ENCODE measurements at regions of chr6 and their contacts with region 1.

Region 1: GRCh38 chr6:73782911-73783310 is 86.9 kb downstream of the CD109 start:
- DNase-seq: no peak
- ATAC-seq: no peak
- H3K4me3 ChIP-seq: no peak overlapping the region
- H3K27ac ChIP-seq: no peak overlapping the region
- H3K4me1 ChIP-seq: no peaks in the 10 kb centered on the region
- H3K27me3 ChIP-seq: no peaks in the 10 kb centered on the region
- CTCF ChIP-seq: no peak
- POLR2A ChIP-seq: no peak
- RAD21 ChIP-seq: no peak

Region 2: DNA sequence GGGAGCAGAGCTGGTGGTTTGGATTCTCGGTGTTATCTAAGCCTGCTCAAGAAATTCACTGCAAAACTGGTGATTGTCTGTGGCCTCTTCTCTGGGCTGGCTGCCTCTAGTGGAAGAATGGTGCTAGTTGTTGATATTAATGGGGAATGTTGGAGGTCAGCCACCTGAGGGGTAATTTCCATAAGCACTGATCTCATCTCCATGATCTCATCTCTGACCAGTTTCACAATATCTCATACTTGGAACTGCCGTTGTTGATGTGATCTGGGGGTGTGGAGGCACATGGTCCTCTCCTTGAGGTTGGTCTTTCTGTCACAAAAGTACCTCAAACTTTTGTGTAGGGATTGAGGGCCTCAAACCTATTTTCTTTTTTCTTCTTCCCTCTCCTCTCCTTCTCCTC is 15.7 kb after region 1 on chr6:
- CTCF ChIA-PET with region 1: interaction called, 8 read pairs
- POLR2A ChIA-PET with region 1: no interaction called
- dilution Hi-C with region 1: no loop called
- in situ Hi-C with region 1: no loop called
- intact Hi-C with region 1: loop called (anchors 2 kb)
- DNase-seq: peak; percentile 99
- ATAC-seq: peak; percentile 89
- H3K4me3 ChIP-seq: no peak overlapping the region
- H3K27ac ChIP-seq: peak overlapping the region; percentile 76; the same call in 1 of the 2 replicates
- H3K4me1 ChIP-seq: peaks cover 13% of the 10 kb centered on the region
- H3K27me3 ChIP-seq: no peaks in the 10 kb centered on the region
- CTCF ChIP-seq: peak; percentile 77
- POLR2A ChIP-seq: no peak
- RAD21 ChIP-seq: peak; percentile 51

Region 3: GRCh38 chr6:73811706-73812105 is 28.8 kb after region 1 on chr6:
- CTCF ChIA-PET with region 1: no interaction called
- POLR2A ChIA-PET with region 1: no interaction called
- dilution Hi-C with region 1: no loop called
- in situ Hi-C with region 1: no loop called
- intact Hi-C with region 1: loop called (anchors 1 kb)
- DNase-seq: no peak
- ATAC-seq: no peak
- H3K4me3 ChIP-seq: no peak overlapping the region
- H3K27ac ChIP-seq: no peak overlapping the region
- H3K4me1 ChIP-seq: no peaks in the 10 kb centered on the region
- H3K27me3 ChIP-seq: no peaks in the 10 kb centered on the region
- CTCF ChIP-seq: no peak
- POLR2A ChIP-seq: no peak
- RAD21 ChIP-seq: no peak